Activated CD4-positive, alpha-beta T cell treated with anti-CD3 and anti-CD28 coated beads, Interleukin-2, amount 10 ng/mL, durations not matched to agents 7 days and 5 days (primary cell): ENCODE measurements at regions of chr10 and their contacts with region 1.

Region 1: DNA sequence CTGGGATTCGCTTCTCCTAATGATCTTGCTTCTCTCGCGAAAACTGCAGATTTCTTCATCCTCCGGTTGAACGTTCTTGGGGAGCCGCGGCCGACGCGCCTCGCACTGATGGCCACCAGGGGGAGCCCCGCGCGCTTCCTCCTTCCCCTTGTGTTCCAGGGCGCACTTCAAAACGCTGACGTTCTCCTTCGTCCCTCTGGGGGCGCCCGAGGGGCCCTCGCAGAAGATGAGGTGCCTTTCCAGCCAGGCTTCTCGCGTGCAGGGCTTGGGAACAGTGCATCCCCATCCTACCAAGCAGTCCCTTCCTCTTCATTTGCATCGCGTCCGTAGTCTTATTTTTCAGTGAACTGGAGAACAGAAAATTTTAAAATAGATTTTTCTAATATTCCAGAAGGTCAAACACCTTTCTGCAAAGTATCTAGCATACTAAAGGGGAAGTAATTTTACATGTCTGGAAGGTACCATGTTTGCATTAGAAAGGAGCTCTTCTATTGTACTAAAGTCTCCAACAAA is 22.5 kb downstream of the GSTO2 start:
- DNase-seq: peak; percentile 89
- H3K4me3 Mint-ChIP-seq: no peak overlapping the region
- H3K27ac Mint-ChIP-seq: no peak overlapping the region
- H3K4me1 Mint-ChIP-seq: peaks cover 14% of the 10 kb centered on the region
- H3K27me3 Mint-ChIP-seq: peaks cover 18% of the 10 kb centered on the region

Region 2: DNA sequence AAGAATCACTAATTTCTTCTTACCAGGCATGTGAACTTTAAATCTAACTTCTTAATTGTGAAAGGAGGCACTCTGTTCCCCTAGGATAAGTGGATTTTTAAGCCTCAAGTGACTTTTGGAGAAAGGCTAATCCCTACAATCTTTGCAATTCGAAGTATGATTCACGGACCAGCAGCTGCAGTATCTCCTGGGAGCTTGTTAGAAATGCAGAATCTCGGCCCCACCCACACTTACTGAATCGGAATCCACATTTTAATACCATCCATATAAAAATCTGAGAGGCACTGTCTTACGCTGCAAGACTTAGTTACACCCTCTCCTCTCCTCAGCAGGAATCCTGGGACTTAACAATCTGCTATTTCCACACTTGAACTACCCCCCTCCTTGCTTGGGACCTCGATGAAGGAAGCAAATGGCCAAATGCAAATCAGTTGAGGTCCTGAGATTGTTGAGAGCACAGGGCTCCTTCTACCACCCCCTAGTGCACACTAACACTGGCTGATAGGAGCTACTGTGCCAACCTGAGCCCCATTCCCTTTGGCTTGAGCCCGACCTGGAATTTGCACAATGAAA is 25.8 kb after region 1 on chr10:
- CTCF ChIA-PET with region 1: interaction called, 13 read pairs
- POLR2A ChIA-PET with region 1: no interaction called
- DNase-seq: no peak
- H3K4me3 Mint-ChIP-seq: no peak overlapping the region
- H3K27ac Mint-ChIP-seq: no peak overlapping the region
- H3K4me1 Mint-ChIP-seq: peaks cover 48% of the 10 kb centered on the region
- H3K27me3 Mint-ChIP-seq: no peaks in the 10 kb centered on the region

Region 3: GRCh38 chr10:104345941-104346340 is 54.4 kb after region 1 on chr10:
- CTCF ChIA-PET with region 1: interaction called, 41 read pairs
- POLR2A ChIA-PET with region 1: no interaction called
- DNase-seq: no peak
- H3K4me3 Mint-ChIP-seq: no peak overlapping the region
- H3K27ac Mint-ChIP-seq: no peak overlapping the region
- H3K4me1 Mint-ChIP-seq: peaks cover 13% of the 10 kb centered on the region
- H3K27me3 Mint-ChIP-seq: no peaks in the 10 kb centered on the region

Region 4: GRCh38 chr10:104353325-104354048 is 62.0 kb after region 1 on chr10 and contains the start of gene CFAP58:
- CTCF ChIA-PET with region 1: interaction called, 41 read pairs
- POLR2A ChIA-PET with region 1: no interaction called
- DNase-seq: peak; percentile 92
- H3K4me3 Mint-ChIP-seq: peak within 1 kb of the TSS; percentile 34
- H3K27ac Mint-ChIP-seq: peak within 1 kb of the TSS; percentile 51
- H3K4me1 Mint-ChIP-seq: no peaks in the 10 kb centered on the region
- H3K27me3 Mint-ChIP-seq: no peaks in the 10 kb centered on the region
- total RNA-seq, gene CFAP58: 0.22 to 0.27 TPM

Region 5: DNA sequence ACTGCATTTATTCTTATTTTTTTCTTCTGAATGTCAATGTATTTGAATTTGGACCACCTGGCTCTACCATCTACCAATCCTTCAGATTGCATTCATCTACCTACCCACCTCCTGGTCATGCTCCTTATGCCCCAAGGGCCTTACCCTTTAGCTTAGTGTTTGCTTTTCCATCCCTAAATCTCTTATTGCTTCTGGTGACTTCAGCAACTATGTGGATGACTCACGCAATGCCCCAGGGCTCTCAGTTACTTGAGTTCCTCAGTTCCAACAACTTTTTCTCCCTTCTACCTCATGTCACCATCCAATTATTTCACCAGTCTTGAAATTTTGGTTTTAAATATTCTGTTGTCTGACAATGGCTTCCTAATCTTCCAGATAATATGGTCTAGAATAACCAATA is 181.0 kb after region 1 on chr10:
- CTCF ChIA-PET with region 1: no interaction called
- POLR2A ChIA-PET with region 1: no interaction called
- DNase-seq: no peak
- H3K4me3 Mint-ChIP-seq: no peak overlapping the region
- H3K27ac Mint-ChIP-seq: no peak overlapping the region
- H3K4me1 Mint-ChIP-seq: no peaks in the 10 kb centered on the region
- H3K27me3 Mint-ChIP-seq: peaks cover 15% of the 10 kb centered on the region

Region 6: DNA sequence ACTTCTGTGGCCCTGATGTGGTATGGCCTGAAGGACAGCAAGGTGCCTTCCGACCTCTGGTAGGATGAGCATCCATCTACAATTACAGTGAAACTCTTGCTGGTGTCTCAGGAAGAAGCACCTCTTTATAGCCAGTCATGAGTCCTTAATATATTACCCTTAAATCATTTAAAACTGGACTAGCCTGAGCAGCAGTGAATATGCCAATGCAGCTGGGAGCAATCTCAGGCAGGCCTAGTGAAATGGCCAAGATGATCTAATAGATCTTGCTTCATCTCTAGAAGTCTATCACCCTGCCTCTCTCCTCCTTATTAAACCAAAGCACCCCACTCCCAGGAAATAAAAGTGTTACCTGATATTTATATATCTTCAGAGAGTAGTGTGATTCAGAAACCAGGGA is 282.9 kb after region 1 on chr10:
- CTCF ChIA-PET with region 1: no interaction called
- POLR2A ChIA-PET with region 1: no interaction called
- DNase-seq: no peak
- H3K4me3 Mint-ChIP-seq: no peak overlapping the region
- H3K27ac Mint-ChIP-seq: no peak overlapping the region
- H3K4me1 Mint-ChIP-seq: no peaks in the 10 kb centered on the region
- H3K27me3 Mint-ChIP-seq: peaks cover 16% of the 10 kb centered on the region

Region 7: DNA sequence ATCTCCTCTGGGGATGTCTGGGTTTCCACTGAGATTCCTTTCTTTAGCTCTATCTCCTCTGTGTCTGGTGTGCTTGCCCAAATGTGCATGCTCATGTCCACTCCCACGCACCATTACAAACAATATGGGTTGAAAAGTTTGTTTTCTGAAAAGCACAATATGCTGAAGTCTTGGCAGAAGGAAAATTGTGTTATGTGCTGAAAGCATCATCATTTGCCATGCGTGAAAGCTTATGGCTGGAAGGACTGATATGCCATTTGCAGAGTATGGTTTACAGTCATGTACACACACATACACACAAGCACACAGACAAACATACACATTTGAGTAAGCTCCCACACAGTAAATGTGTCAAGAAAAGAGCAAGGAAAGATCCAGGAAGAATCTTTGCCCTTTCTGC is 581.2 kb after region 1 on chr10:
- CTCF ChIA-PET with region 1: no interaction called
- POLR2A ChIA-PET with region 1: no interaction called
- DNase-seq: no peak
- H3K4me3 Mint-ChIP-seq: no peak overlapping the region
- H3K27ac Mint-ChIP-seq: no peak overlapping the region
- H3K4me1 Mint-ChIP-seq: no peaks in the 10 kb centered on the region
- H3K27me3 Mint-ChIP-seq: no peaks in the 10 kb centered on the region